ENCODE measurements at regions of chr2 and their contacts with region 1.

Region 1: GRCh38 chr2:176454893-176455811 is 185.9 kb downstream of the MTX2 start:
- DNase-seq: peak; percentile 80
- ATAC-seq: peak; percentile 59 to 64

Region 2: DNA sequence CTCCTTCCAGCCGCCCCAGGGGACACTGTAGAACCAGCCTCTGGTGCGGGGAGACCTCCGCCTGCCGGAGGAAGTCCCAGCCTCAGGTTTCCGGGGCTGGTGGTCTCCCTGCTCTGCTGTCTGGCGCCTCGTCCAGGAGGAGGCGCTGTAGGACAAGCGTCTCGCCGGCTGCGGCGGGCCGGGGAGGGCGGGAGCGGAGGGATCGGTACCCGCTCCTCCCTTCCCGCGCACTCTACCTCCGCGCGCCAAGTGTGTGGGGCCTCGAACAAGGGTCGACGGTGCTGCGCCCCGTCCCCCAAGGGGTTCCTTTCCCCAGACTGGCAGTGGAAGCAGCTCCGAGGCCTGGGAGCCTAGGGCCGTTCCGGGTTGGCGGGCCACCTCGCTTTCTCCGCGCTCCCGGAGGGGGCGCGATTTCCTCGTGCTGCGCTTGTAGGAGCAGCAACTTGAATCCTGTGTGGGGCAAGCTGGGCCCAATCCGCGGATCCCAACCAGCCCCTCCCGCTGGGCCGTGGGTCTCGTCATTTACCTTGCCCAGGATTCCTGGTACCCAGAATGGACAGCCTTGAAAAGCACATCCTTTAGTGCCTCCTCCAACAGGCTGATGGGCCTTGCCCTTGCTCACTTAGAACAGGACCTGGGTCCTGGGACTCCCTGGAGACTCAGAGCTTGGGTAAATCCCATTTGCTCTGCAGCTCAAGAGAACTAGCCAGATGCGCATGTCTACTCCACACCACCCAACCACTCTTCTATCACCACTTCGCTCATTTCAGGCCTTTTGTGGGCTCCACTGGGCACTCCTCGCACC is 314.4 kb before region 1 on chr2:
- intact Hi-C with region 1: loop called (anchors 2 kb)
- DNase-seq: peak; percentile 73
- ATAC-seq: peak; percentile 92 to 93

Region 3: GRCh38 chr2:176508984-176509740 is 54.0 kb after region 1 on chr2:
- intact Hi-C with region 1: no loop called
- DNase-seq: no peak
- ATAC-seq: no peak

Region 4: GRCh38 chr2:176554101-176555048 is 99.2 kb after region 1 on chr2:
- intact Hi-C with region 1: loop called (anchors 5 to 10 kb)
- DNase-seq: peak; percentile 28
- ATAC-seq: peak; percentile 66 to 72

Region 5: DNA sequence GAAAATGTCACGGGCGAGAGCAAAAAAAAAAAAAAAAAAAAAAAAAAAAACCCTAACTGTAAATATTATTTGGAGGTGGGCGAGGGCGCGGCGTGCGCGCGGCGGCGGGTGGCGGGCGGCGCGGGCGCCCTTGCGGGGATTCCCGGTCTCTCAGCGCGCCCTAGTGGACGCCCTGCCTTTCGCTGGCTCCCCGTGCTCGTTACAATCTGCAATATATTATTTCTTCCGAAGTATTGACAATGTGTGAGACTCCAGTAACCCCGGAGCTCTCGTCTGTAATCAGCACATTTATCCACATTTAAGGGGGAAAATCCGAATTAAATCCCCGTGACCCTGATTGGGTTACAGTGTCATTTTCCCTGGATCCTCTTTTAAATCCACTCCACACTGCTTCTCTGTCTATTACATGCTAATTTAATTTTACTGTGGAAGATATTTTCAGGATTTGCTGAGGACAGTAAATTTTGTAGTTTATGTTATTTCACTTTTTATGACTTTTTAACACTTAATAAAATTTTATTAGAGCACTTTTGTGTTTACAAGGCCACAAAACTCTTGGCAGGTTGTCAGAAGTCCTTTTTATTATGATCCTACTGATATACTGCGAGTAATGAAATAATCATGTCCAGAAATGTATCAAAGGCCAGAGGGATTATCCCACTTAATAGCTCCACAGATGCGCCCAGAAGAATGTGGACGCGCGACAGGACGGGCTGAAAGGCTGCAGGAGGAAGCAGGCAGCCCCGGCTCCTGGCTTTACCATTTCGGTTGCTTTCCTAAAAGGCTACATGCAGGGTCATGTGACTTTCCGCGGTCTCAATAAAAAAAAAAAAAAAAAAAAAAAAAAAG is 183.2 kb after region 1 on chr2:
- intact Hi-C with region 1: loop called in 1 of 2 experiments (anchors 5 kb)
- DNase-seq: peak; percentile 74
- ATAC-seq: peak; percentile 94 to 95